Right ventricle myocardium inferior (tissue), 1 donor: ENCODE measurements at regions of chr1 and their contacts with region 1.

Region 1: GRCh38 chr1:12549460-12550349 is 68.3 kb downstream of the DHRS3 start:
- DNase-seq: no peak
- ATAC-seq: peak; percentile 14

Region 2: GRCh38 chr1:12376106-12377045 is 173.3 kb before region 1 on chr1:
- intact Hi-C with region 1: no loop called
- DNase-seq: no peak
- ATAC-seq: peak; percentile 57

Region 3: DNA sequence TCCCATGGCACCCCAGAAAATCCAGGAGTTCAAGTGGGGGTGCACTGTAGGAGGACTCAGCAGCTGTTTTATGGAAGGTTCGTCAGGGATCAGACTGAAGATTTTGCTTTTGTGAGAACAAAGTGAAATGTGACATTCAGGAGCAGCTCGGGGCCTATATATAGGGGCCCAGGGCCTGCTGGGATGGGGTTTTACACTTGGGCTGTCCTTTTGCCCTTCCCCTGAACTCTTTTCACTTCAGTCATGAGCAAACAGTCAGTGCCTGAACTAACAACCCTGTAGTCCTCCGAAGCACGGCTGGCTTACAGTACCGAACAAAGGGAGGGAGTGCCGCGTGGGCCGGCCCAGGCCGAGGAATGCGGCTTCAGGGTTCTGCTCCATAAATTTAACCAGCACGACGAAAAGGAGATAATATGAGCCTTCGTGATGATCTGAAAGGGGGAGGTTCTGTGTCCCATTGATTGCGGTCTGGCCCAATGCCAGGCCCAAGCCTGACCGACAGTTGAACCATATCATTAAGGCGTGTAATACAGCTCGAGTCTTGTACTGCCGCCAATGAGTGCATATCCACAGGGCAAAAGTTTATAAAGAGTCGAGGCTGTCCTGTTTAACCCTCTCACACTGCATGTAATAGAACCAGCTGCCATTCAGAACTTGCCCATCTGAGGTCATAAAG is 71.6 kb before region 1 on chr1:
- intact Hi-C with region 1: no loop called
- DNase-seq: peak; percentile 91
- ATAC-seq: peak; percentile 73

Region 4: GRCh38 chr1:12511516-12512468 is 37.9 kb before region 1 on chr1:
- intact Hi-C with region 1: loop called (anchors 5 kb)
- DNase-seq: no peak
- ATAC-seq: no peak